Prostate gland (tissue), 2 donors: ENCODE measurements at regions of chr19 and their contacts with region 1.

Region 1: GRCh38 chr19:4776436-4777205 is 14.9 kb upstream of the FEM1A start:
- DNase-seq: no peak
- H3K4me3 ChIP-seq: no peak overlapping the region
- H3K27ac ChIP-seq: no peak overlapping the region
- H3K4me1 ChIP-seq: no peaks in the 10 kb centered on the region
- H3K27me3 ChIP-seq: no peaks in the 10 kb centered on the region
- CTCF ChIP-seq: no peak
- POLR2A ChIP-seq: no peak

Region 2: DNA sequence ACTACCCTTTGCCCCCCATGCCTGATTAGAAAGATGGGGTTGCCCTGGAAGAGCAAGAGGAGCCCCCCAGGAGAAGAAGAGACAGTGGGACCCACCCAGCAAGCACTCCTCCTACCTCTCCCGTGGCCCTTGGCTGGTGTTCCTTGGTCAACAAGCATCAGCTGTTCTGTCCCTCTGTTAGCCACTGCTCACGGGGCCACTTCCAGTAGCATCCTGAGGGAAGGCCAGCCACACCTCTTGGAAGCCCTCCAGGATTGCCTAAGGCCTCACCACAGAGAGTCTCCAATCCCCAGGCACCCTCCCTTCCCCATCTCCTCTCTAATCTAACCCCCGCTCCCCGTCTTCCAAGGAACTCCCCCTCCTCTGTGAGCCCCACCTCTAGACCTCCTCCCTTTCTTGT is 37.9 kb before region 1 on chr19:
- intact Hi-C with region 1: loop called (anchors 5 kb)
- DNase-seq: no peak
- H3K4me3 ChIP-seq: no peak overlapping the region
- H3K27ac ChIP-seq: no peak overlapping the region
- H3K4me1 ChIP-seq: no peaks in the 10 kb centered on the region
- H3K27me3 ChIP-seq: no peaks in the 10 kb centered on the region
- CTCF ChIP-seq: no peak
- POLR2A ChIP-seq: no peak